AG04449 (cell line): ENCODE measurements at regions of chr1 and their contacts with region 1.

Region 1: DNA sequence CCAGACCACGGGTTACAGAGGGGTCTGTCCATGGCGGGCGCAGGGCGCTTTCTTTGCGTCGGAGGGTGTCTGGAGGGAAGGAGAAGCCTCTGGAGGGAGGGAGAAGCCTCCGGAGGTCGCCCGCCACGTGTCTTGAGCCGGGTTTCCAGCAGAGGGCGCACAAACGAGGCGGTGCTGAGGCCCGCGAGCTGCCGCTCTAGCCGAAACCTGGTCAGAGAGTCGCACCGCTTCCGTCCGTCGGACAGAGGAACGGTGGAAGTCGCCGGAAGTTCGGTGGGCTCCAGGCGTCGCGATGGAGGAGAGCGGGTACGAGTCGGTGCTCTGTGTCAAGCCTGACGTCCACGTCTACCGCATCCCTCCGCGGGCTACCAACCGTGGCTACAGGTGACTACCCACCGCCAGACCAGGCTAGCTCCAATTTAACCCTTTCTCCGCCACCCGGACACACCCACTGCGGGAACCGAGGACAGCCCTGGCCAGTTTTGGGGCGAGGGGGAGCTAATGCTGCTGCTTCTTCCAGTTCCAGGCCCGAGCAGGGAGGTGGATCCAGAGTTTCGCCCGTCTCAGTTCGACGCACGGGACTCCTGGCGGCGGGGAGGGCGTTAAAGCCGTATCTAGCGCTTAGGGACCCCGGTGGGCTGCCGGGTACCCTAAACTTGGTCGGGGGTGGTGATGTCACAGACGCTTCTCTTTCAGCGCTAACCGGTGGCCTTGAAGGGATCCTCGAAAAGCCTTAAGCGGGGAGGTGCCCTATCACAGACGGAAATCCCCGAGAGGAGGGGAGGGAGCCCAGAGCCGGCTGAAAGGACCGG is at the start of gene NECAP2:
- DNase-seq: peak; percentile 36
- H3K4me3 ChIP-seq: peak within 1 kb of the TSS; percentile 99
- CTCF ChIP-seq: peak; percentile 97

Region 2: DNA sequence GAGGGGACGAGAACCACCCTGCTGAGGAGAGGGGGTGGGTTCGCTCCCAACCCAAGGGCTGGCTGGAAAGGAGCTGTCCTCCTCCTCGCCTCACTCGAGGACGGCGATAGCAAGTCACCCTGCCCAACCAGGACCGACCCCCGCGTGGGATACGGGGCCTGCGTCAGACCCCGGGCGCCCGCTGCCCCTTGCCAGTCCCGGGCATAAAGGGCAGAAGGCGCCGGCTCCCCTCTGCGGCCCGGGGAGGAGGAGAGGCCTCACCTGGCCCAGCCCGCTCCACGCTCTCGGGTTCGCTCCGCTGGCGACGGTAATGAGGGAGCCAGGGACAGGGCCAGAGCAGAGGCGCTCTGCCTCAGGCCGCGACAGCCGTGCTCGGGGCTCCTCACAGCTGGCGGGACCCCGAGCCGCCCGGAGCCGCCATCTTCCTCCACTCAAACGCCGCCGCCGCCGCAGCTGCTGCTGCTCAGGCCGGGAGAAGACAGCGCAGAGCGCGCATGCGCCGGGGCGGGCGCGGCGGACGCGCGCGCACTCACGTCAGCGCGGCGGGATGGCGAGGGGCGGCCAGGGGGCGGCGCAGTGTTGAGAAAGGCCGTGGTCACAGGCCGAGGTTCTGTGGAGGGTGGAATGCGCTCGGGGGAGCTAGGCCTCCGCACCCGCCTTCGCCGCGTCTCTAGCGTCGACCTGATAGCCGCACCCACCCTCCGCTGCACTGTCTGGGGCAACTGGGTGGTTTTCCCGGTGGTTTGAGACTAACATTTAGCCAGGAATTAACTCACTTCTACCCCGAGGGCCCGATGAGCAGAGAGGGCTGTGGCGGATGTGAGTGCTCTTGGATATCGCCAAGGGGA is 88.5 kb before region 1 on chr1 and contains the start of gene FBXO42:
- CTCF ChIA-PET with region 1: interaction called, 14 read pairs
- POLR2A ChIA-PET with region 1: no interaction called
- DNase-seq: no peak
- H3K4me3 ChIP-seq: peak within 1 kb of the TSS; percentile 80
- CTCF ChIP-seq: peak; percentile 74

Region 3: DNA sequence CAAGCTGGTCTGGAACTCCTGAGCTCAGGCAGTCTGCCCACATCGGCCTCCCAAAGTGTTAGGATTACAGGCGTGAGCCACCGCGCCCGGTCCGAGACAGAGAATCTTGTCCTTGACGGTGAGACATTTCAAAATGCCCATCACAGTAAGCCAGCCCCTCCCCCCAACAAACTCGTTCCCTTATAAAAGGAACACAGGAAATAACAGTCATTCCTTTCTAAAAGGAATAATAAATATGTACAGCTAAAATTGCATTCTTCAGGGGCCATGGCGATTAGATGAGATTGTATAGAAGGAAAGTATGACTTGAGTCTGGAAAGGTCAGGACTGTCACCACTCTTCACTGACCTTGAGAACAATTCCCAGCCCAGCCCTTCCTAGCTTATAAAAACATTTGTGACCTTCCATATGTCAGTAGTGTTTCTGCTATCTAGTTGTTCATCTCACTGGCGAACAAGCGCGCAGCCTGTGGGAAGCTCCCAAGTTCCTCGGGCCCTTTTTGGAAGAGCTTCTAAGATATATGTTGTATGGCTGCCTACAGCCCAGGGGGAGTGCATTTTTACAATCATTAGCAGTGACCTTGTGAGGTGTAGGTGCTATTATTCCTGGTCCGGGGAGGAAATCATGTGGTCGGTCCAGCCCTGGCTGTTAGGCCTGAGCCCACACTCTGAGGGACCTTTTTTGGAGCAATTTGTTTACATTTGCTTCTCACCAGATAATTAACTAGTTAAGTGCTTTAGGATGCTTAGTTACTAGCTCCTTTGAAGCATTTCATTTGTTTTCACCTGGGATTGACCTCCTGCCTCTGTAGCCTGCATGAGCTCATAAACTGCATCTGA is 64.9 kb before region 1 on chr1:
- CTCF ChIA-PET with region 1: interaction called, 10 read pairs
- POLR2A ChIA-PET with region 1: no interaction called
- DNase-seq: no peak
- H3K4me3 ChIP-seq: no peak overlapping the region
- CTCF ChIP-seq: no peak

Region 4: GRCh38 chr1:16420424-16421118 is 20.1 kb before region 1 on chr1:
- CTCF ChIA-PET with region 1: interaction called, 28 read pairs
- POLR2A ChIA-PET with region 1: no interaction called
- DNase-seq: no peak
- H3K4me3 ChIP-seq: no peak overlapping the region
- CTCF ChIP-seq: no peak

Region 5: DNA sequence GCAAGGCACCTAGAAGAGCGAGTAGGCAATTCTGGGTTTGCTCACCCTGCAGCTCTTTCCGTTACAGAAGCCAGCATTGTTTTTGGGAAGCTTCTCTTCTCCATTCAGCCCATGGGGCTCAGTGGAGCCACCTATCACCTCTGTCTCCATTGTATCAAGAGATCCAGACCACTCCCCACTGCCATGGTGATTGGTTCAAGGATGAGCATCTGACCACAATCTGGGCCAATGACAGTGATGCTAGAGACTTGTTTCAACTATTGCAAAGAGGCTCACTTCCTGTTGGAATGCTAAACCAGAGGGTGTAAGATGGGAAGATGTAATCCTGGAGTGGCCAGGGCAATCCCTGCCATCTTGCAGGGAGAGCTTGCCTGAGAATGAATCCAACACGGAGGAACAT is 10.1 kb before region 1 on chr1:
- CTCF ChIA-PET with region 1: interaction called, 28 read pairs
- POLR2A ChIA-PET with region 1: no interaction called
- DNase-seq: no peak
- H3K4me3 ChIP-seq: no peak overlapping the region
- CTCF ChIP-seq: no peak

Region 6: GRCh38 chr1:16451841-16452528 is 11.3 kb after region 1 on chr1:
- CTCF ChIA-PET with region 1: interaction called, 46 read pairs
- POLR2A ChIA-PET with region 1: no interaction called
- DNase-seq: no peak
- H3K4me3 ChIP-seq: no peak overlapping the region
- CTCF ChIP-seq: no peak

Region 7: DNA sequence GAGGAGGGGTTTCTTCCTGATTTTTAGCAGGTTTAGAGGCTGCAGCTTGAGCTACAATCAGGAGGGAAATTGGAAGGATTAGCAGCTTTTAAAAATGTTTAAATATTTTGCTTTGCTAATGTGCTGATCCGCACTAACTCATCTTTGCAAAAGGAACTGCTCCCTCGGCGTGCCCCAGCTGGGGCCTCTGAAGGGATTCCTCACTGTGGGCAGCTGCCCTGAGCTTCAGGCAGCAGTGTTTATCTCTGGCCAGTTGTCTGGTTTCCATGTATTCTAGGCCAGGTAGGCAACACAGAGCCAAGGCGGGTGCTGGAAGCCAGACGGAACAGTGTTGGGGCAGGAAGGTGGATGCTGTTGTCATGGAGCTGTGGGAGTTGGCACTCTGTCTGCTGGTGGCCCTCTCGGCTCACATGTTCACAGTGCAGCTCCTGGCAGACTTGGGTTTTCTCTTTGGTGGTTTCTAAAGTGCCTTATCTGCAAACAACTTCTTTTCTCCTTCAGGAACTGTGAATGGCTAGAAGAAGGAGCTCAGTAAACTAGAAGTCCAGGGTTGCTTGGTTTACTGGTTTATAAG is 18.8 kb after region 1 on chr1:
- CTCF ChIA-PET with region 1: interaction called, 26 read pairs
- POLR2A ChIA-PET with region 1: interaction called, 3 read pairs
- DNase-seq: no peak
- H3K4me3 ChIP-seq: no peak overlapping the region
- CTCF ChIP-seq: no peak